Naive thymus-derived CD4-positive, alpha-beta T cell (primary cell): ENCODE measurements at regions of chr12 and their contacts with region 1.

Region 1: GRCh38 chr12:21539797-21540196 is 13.7 kb downstream of the SPX start:
- DNase-seq: no peak
- ATAC-seq: no peak
- H3K4me3 ChIP-seq: no peak overlapping the region
- H3K4me3 Mint-ChIP-seq: no peak overlapping the region
- H3K27ac ChIP-seq: no peak overlapping the region
- H3K27ac Mint-ChIP-seq: no peak overlapping the region
- H3K4me1 ChIP-seq: no peaks in the 10 kb centered on the region
- H3K4me1 Mint-ChIP-seq: no peaks in the 10 kb centered on the region
- H3K27me3 ChIP-seq: no peaks in the 10 kb centered on the region
- H3K27me3 Mint-ChIP-seq: peaks cover 0 to 4% (median 1%) of the 10 kb centered on the region in 5 donors

Region 2: DNA sequence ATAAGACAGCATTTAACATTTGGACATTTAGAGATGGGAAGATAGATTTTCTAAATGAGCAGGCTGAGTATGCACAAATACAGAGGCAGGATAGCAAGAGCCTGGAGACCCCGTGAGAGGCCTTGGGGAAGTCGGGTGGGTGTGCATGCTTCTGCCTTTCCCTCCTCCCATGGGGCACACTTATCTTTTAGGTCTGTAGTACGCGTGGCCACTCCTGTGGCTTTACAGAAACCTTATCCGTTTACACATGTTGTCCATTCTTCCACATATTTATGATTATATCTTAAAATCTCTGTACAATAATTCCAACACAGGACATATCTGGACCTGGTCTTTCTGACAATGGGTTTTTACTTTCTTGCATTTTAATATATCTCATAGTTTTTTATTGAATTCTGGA is 31.2 kb after region 1 on chr12:
- CTCF ChIA-PET with region 1: no interaction called
- POLR2A ChIA-PET with region 1: no interaction called
- intact Hi-C with region 1: no loop called
- DNase-seq: no peak
- ATAC-seq: no peak
- H3K4me3 ChIP-seq: no peak overlapping the region
- H3K4me3 Mint-ChIP-seq: no peak overlapping the region
- H3K27ac ChIP-seq: no peak overlapping the region
- H3K27ac Mint-ChIP-seq: no peak overlapping the region
- H3K4me1 ChIP-seq: no peaks in the 10 kb centered on the region
- H3K4me1 Mint-ChIP-seq: no peaks in the 10 kb centered on the region
- H3K27me3 ChIP-seq: peaks cover 0 to 3% of the 10 kb centered on the region in 2 donors
- H3K27me3 Mint-ChIP-seq: peaks cover 0 to 3% (median 0%) of the 10 kb centered on the region in 5 donors

Region 3: DNA sequence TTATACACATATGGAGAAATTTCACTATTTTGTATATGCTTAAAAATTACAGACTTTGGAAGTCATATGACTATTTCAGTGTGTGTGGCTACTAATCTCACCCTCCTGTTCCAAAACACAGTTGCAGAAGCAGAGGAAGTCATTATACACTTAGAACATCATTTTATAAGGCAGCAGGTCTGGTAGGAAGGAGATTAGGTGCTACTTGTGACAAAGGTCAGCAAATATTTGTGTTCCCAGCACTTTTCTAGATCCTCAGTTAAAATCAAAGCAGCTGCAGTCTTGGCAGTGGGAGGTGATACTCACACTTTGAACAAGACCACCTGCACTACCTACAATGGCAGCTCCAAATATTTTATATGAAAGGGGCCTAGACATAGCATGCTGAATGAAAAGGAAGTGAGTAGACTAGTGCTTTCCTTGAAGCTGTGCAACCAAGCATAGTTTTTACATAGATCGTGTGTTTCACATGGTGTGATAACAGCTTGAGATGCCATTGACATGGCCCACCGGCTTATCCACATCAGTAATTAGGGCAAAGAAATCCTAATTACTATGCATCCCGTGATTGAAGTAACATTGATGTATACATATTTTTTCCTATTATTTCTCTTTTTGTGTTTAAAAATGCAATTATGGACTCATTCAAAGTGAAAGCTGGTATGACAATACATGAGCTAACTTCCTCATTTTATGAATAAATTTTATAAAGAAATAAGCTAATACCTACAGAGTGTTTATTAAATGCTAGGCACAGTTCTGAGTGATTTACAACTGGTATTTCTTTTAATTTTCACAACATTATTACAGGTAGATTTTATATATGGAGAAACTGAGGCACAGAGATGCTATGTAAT is 59.6 kb after region 1 on chr12:
- CTCF ChIA-PET with region 1: no interaction called
- POLR2A ChIA-PET with region 1: no interaction called
- intact Hi-C with region 1: loop called in 1 of 2 experiments (anchors 5 kb)
- DNase-seq: no peak
- ATAC-seq: no peak
- H3K4me3 ChIP-seq: no peak overlapping the region
- H3K4me3 Mint-ChIP-seq: no peak overlapping the region
- H3K27ac ChIP-seq: no peak overlapping the region
- H3K27ac Mint-ChIP-seq: no peak overlapping the region
- H3K4me1 ChIP-seq: no peaks in the 10 kb centered on the region
- H3K4me1 Mint-ChIP-seq: peaks cover 0 to 2% (median 0%) of the 10 kb centered on the region in 7 donors
- H3K27me3 ChIP-seq: no peaks in the 10 kb centered on the region
- H3K27me3 Mint-ChIP-seq: peaks cover 0 to 16% (median 0%) of the 10 kb centered on the region in 5 donors